Activated T-helper 1 cell treated with anti-CD3 and anti-CD28 coated beads, Interleukin-12 subunit alpha, Interleukin-12 subunit beta, Interleukin-2, Interleukin-4 antibody, amounts not matched to agents 30 ng/mL and 10 ng/mL and 1 ng/mL, durations not matched to agents 14 hours and 24 hours and 36 hours (primary cell): ENCODE measurements at regions of chr6 and their contacts with region 1.

Region 1: DNA sequence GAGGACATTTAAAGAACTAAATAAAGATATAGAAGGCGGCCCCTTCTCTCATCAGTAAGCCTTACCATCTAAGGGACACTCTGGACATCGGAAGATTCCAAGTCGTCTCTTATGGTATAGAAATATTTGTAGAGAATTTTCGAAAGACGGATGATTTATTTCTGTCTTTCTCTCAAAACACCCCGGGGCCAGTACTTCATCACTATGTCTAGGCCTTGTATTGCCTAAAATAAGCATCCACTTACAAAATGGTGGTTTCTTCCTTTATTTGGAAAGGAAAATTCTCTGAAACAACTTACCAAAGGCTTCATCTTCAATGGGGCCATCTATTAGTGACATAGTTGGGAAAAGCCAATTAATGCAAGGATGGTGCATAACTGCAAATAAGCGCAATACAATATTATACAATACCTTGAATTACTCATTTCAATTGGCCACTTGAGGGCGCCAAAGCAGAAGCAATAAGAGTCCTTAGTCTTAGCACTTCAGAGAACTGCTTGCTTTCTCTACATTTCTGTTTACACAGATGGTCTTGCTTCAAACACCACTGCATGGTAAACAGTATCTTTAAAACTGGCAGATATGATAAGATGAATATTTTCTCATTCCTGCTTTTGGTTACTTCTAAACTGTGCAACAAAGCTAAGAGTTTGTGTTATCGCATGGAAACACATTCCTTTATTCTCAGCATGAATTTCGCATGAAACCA is 113.2 kb downstream of the VIP start:
- DNase-seq: peak; percentile 36
- H3K4me3 Mint-ChIP-seq: no peak overlapping the region
- H3K27ac Mint-ChIP-seq: no peak overlapping the region
- H3K4me1 Mint-ChIP-seq: no peaks in the 10 kb centered on the region
- H3K27me3 Mint-ChIP-seq: peaks cover 1% of the 10 kb centered on the region

Region 2: DNA sequence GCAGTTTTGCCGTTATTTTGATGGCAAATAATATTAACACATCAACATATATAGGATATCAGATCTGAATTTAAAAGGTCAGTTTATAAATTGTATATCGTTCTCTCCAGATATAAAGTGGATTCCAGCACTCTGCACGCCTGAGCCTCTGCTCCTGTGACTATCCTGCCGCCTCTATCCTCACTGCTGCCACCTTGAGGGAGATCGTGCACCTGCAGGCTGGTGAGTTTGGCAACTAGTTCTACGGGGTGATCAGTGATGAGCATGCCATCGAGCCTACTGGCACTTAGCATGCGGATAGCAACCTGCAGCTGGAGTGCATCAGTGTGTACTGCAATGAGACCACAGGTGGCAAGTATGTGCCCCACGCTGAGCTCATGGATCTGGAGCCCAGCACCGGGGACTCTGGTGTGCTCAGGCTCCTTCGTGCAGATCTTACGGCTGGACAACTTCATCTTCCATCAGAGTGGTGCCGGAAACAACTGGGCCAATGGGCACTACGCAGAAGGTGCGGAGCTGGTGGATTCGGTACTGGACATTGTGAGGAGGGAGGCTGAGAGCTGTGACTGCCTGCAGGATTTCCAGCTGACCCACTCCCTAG is 34.1 kb after region 1 on chr6:
- intact Hi-C with region 1: loop called (anchors 1 kb)
- DNase-seq: peak; percentile 45
- H3K4me3 Mint-ChIP-seq: no peak overlapping the region
- H3K27ac Mint-ChIP-seq: no peak overlapping the region
- H3K4me1 Mint-ChIP-seq: peaks cover 5% of the 10 kb centered on the region
- H3K27me3 Mint-ChIP-seq: peaks cover 14% of the 10 kb centered on the region

Region 3: DNA sequence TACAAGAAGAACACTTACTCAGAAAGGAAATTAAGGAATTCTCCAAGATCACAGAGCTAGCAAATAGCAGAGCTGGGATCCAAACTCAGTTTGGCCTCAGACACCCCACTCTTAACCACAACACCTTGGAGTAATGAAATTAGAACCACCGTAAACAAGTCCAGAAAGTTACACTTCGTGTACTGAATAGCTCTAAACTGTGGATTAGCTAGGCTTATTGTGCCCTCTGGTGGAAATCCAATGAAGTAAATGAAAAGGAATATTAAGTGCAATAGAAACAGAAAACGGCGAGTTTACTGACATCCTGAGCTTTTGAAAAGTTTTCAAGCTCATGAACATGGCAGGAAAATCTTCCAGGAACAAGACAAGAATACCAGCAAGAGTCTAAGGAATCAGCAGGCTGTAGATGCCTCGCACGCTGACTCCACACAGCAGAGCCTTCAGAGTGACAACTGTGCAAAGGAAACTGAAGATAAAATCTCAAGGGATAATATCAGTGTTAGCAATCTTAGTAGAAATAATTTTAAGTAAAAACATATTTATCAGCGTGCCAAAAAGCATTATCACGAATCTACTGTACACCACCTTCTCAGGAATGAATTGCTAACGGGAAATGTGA is 84.5 kb after region 1 on chr6:
- intact Hi-C with region 1: loop called (anchors 1 kb)
- DNase-seq: no peak
- H3K4me3 Mint-ChIP-seq: no peak overlapping the region
- H3K27ac Mint-ChIP-seq: no peak overlapping the region
- H3K4me1 Mint-ChIP-seq: peaks cover 8% of the 10 kb centered on the region
- H3K27me3 Mint-ChIP-seq: peaks cover 15% of the 10 kb centered on the region

Region 4: GRCh38 chr6:153023977-153024708 is 160.4 kb after region 1 on chr6:
- intact Hi-C with region 1: loop called (anchors 1 kb)
- DNase-seq: peak; percentile 28
- H3K4me3 Mint-ChIP-seq: no peak overlapping the region
- H3K27ac Mint-ChIP-seq: no peak overlapping the region
- H3K4me1 Mint-ChIP-seq: peaks cover 7% of the 10 kb centered on the region
- H3K27me3 Mint-ChIP-seq: peaks cover 40% of the 10 kb centered on the region

Region 5: DNA sequence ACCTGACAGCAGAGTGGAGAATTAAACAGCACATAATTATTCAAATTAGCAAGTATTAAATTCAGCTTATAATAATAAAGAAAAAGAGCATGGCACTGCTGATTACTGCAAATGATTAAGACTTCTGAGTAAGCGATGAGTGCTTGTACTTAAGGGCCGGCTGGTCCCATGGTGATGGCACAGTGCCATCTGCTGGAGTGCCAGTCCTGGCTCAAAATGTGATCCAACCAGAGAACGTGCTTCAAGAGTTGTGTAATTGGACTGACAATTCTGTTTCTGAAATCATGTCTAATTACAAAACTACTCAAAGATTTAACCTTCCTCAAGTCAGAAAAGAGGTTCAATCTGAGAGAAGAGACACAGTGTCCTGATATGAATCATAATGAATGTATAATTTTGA is 448.9 kb after region 1 on chr6:
- intact Hi-C with region 1: loop called (anchors 5 kb)
- DNase-seq: peak; percentile 1
- H3K4me3 Mint-ChIP-seq: no peak overlapping the region
- H3K27ac Mint-ChIP-seq: no peak overlapping the region
- H3K4me1 Mint-ChIP-seq: no peaks in the 10 kb centered on the region
- H3K27me3 Mint-ChIP-seq: no peaks in the 10 kb centered on the region

Region 6: GRCh38 chr6:153580776-153581175 is 717.0 kb after region 1 on chr6:
- intact Hi-C with region 1: no loop called
- DNase-seq: no peak
- H3K4me3 Mint-ChIP-seq: no peak overlapping the region
- H3K27ac Mint-ChIP-seq: no peak overlapping the region
- H3K4me1 Mint-ChIP-seq: no peaks in the 10 kb centered on the region
- H3K27me3 Mint-ChIP-seq: no peaks in the 10 kb centered on the region